ENCODE measurements at regions of chr10 and their contacts with region 1.

Region 1: GRCh38 chr10:107379601-107380000 is 215.1 kb upstream of the SORCS1 start:
- DNase-seq: no peak
- ATAC-seq: no peak
- H3K4me3 ChIP-seq: no peak overlapping the region
- H3K27ac ChIP-seq: no peak overlapping the region
- H3K4me1 ChIP-seq: no peaks in the 10 kb centered on the region
- H3K27me3 ChIP-seq: no peaks in the 10 kb centered on the region
- CTCF ChIP-seq: no peak
- EP300 ChIP-seq: no peak
- POLR2A ChIP-seq: no peak
- RAD21 ChIP-seq: no peak

Region 2: DNA sequence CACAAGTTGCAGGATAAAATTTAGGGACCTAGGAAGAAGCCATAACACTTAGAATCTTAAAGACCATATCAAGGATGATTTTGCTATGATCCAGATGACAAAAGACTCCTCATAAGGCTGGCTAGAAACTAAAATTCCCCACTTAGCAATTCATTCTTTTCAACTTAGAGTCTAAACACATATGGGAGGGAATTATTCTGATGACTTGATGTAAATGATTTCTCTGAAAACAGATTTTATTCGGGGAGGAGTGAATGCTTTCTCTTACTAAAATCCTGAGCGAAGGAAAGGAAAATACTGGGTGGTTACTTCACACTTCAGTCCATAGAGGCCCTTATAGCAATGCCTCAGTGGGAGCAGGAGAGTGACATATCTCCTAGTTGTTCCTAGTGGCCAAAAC is 76.4 kb before region 1 on chr10:
- CTCF ChIA-PET with region 1: no interaction called
- POLR2A ChIA-PET with region 1: no interaction called
- in situ Hi-C with region 1: no loop called
- intact Hi-C with region 1: loop called (anchors 2 kb)
- DNase-seq: no peak
- ATAC-seq: no peak
- H3K4me3 ChIP-seq: no peak overlapping the region
- H3K27ac ChIP-seq: no peak overlapping the region
- H3K4me1 ChIP-seq: no peaks in the 10 kb centered on the region
- H3K27me3 ChIP-seq: no peaks in the 10 kb centered on the region
- CTCF ChIP-seq: no peak
- EP300 ChIP-seq: no peak
- POLR2A ChIP-seq: no peak
- RAD21 ChIP-seq: no peak

Measured in HepG2 (cell line).